Left ventricle myocardium inferior (tissue), 1 donor: ENCODE measurements at regions of chr17 and their contacts with region 1.

Region 1: DNA sequence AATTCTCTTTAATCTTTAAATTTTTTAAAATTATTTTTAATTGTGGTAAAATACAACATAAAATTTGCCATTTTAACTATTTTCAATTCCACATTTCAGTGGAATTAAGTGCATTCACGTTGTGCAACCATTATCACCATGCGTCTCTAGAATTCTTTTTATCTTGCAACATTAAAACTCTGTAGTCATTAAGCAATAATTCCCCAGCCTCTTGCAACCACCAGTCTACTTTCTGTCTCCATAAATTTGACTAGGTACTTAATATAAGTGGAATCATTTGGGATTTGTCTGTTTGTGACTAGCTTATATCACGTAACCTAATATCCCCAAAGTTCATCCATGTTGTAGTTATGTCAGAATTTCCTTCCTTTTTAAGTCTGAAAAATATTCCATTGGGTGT is 79.1 kb downstream of the TAOK1 start:
- DNase-seq: no peak
- H3K4me3 ChIP-seq: no peak overlapping the region
- H3K27ac ChIP-seq: no peak overlapping the region
- H3K4me1 ChIP-seq: no peaks in the 10 kb centered on the region
- H3K27me3 ChIP-seq: no peaks in the 10 kb centered on the region
- CTCF ChIP-seq: no peak

Region 2: DNA sequence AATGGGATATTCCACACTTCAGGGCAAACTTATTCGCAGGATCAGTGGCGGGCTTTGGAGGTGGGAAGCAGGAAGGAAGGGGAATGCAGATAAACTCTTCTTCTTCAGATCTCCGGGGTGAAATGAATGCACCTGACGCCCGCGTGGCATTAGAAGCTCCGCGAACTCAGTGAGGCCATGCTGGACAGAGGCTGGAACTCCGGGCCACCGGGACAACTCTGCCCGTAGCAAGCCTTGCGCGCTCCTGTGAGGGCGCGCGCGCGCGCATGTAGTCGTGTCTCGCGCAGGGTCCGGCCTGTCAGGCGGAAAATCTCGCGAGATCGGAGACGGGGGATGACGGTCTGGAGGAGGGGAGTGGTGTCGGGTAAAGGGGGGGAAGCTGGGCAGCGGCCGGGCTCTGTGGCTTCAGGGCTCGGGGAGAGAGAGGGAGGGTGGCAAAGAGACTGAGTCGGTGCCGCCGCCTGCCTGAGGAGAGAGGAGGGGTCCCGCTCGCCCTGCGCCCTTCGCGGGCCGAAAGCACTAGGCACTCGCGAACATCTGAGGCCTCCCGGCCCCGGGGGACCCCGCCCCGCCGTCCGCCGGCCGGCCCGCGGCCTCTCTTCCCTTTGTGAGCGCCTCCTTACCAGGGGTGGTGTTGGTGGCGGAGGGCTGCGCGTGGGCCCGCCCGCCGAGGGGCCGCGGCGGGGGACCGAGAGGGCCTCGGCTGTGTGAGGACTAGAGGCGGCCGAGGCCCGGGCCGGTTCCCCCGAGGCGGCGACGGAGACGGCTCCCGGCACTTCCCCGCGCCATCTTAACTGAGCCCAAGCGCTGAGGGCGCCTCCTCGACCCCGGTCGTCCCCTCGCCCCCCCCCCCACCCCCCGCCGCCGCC is 79.1 kb before region 1 on chr17 and contains the start of gene TAOK1:
- intact Hi-C with region 1: no loop called
- DNase-seq: peak; percentile 100
- H3K4me3 ChIP-seq: peak within 1 kb of the TSS; percentile 86
- H3K27ac ChIP-seq: peak within 1 kb of the TSS; percentile 97
- H3K4me1 ChIP-seq: peaks cover 47% of the 10 kb centered on the region
- H3K27me3 ChIP-seq: no peaks in the 10 kb centered on the region
- CTCF ChIP-seq: no peak
- total RNA-seq, gene TAOK1: 50.7 TPM

Region 3: DNA sequence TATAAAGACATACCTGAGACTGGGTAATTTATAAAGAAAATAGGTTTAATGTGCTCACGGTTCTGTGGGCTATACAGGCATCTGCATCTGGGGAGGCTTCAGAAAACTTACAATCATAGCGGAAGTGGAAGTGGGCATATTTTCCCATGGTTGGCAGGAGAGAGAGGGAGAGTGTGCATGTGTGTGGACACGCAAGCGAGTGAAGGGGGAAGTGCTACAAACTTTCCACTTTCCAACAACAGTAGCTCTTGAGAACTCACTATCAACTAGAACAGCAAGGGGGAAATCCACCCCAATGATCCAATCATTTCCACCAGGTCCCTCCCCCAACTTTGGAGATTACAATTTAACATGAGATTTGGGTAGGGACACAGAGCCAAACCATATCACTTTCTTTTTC is 68.0 kb before region 1 on chr17:
- intact Hi-C with region 1: loop called (anchors 10 kb)
- DNase-seq: no peak
- H3K4me3 ChIP-seq: no peak overlapping the region
- H3K27ac ChIP-seq: no peak overlapping the region
- H3K4me1 ChIP-seq: peaks cover 15% of the 10 kb centered on the region
- H3K27me3 ChIP-seq: no peaks in the 10 kb centered on the region
- CTCF ChIP-seq: no peak